ENCODE measurements at regions of chr11 and their contacts with region 1.

Region 1: DNA sequence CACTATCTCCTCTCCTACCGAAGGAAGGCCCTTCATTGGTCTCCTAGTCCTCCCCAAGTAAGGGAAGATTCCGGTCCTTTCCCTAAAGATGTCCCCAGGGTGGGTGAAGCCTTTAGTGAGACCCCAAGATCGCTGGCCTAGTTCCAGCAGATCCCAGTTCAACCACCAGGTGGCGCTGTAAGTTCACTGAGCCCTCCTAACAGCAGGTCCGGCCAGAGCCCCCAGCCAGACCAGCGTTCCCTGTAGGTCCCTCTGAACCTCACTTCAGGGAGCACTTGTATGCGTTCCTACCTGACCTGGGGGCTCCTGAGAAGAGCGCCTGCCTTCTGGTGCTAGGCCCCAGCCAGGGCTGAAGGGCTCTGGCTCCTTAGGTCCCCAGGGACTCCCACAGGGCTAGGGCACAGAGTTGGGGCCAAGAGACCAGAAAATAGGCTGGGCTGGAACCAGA is 38.1 kb downstream of the LMO1 start:
- DNase-seq: peak; percentile 50 to 91 (median 78)
- H3K4me3 ChIP-seq: no peak overlapping the region
- H3K27ac ChIP-seq: no peak overlapping the region
- H3K4me1 ChIP-seq: peaks cover 0 to 8% of the 10 kb centered on the region in 2 donors
- H3K27me3 ChIP-seq: no peaks in the 10 kb centered on the region
- CTCF ChIP-seq: peak; percentile 89 to 98 (median 96)
- POLR2A ChIP-seq: no peak

Region 2: DNA sequence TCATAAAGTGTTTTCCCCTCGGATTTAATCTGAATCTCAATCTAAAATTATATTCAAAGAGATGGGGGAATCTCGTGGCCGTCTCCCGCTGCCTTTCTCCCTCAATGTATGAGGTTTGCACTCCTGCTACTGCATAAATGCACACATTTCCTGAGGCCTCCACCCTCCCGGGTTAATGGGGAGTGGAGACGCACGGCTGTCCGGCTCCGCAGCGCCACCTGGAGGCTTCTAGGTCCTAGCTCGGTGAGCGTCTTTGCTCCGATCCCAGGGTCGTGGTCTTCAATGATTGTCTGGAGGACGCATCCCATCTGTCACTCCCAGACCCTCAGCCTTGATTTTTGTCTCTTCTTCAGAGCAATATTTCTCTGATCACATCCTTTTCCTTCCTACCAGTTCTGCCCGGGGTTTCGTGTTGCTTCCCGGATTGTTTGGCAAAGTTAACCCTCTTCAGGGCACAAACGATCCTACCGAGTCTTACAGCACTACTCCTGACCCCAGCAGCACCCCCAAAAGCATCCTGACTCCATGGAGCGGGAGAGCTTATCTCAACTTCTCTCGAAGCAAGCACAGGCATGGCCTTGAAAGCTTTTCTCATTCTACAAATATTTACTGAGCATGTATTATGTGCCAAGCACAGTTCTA is 38.3 kb after region 1 on chr11 and contains the start of gene LMO1:
- intact Hi-C with region 1: loop called (anchors 2 to 5 kb)
- DNase-seq: peak; percentile 57 to 89 (median 82)
- H3K4me3 ChIP-seq: peak within 1 kb of the TSS in 2 of 4 donors; percentile 38 to 71
- H3K27ac ChIP-seq: peak within 1 kb of the TSS in 1 of 5 donors; percentile 38
- H3K4me1 ChIP-seq: peaks cover 20 to 28% of the 10 kb centered on the region in 2 donors
- H3K27me3 ChIP-seq: peaks cover 45% of the 10 kb centered on the region
- CTCF ChIP-seq: peak; percentile 65 to 93 (median 77)
- POLR2A ChIP-seq: no peak
- total RNA-seq, gene LMO1: 1.1 to 2.5 (median 1.3) TPM in 3 of 9 donors, not detected in the others

Region 3: DNA sequence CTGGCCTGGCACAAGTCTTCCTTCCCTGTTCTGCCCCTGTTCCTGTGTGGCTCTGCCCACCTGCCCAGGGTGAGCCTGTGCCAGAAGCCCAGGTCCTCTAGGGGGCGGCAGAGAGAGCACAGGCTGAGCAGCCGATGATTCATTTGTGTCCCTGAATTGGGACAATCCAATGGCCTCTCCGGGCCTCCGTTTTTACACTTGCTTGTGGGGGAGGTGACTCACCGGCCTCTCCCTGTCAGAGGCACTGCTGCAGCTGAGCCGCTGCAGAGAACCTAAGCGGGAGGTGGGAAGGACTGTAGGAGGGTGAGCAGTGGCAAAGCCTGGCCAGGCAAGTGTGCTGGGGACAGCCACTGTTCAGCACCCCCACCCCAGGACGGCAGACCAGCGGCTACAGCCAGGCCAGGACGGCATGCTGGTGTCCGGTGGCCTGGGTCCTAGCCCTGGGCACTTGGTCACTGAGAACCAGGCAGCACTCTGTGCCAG is 103.3 kb after region 1 on chr11:
- intact Hi-C with region 1: loop called in 1 of 2 experiments (anchors 10 kb)
- DNase-seq: peak; percentile 91 to 97 (median 96)
- H3K4me3 ChIP-seq: no peak overlapping the region
- H3K27ac ChIP-seq: peak overlapping the region in 2 of 5 donors; percentile 0 to 45
- H3K4me1 ChIP-seq: no peaks in the 10 kb centered on the region
- H3K27me3 ChIP-seq: no peaks in the 10 kb centered on the region
- CTCF ChIP-seq: peak; percentile 78 to 87 (median 85)
- POLR2A ChIP-seq: peak in 1 of 2 donors; percentile 31